MCF 10A (cell line): ENCODE measurements at regions of chr5 and their contacts with region 1.

Region 1: DNA sequence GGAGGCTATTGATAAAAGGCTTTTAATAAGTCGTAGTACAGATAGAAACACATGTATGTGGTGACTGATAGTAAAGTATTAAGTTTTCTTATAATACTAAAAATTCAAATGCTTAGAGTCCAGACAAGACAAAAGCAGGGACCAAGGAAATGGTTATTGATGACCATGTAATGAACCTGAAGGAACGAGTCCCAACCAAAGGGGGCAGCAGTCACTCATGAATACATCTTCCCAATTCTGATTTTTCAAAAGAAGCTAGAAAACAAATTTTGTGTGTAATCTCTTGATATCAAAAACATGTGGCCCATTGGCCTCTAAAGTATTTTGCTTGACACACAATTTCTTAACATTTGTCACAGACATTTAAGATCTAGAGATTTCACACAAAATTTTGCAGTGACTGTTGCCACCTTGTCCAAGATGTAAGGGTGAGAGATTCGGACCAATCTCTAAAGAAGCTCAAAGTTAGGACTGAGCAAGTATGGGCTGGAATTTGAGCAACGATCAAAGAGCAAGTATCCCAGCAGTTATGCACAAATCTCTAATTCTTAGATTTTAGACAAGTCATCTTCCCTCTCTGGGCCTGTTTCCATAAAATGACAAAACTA is 66.8 kb downstream of the ARL15 start:
- DNase-seq: peak; percentile 57
- H3K4me3 Mint-ChIP-seq: no peak overlapping the region
- H3K27ac Mint-ChIP-seq: no peak overlapping the region
- H3K4me1 Mint-ChIP-seq: no peaks in the 10 kb centered on the region
- H3K27me3 Mint-ChIP-seq: no peaks in the 10 kb centered on the region
- CTCF ChIP-seq: peak; percentile 86

Region 2: DNA sequence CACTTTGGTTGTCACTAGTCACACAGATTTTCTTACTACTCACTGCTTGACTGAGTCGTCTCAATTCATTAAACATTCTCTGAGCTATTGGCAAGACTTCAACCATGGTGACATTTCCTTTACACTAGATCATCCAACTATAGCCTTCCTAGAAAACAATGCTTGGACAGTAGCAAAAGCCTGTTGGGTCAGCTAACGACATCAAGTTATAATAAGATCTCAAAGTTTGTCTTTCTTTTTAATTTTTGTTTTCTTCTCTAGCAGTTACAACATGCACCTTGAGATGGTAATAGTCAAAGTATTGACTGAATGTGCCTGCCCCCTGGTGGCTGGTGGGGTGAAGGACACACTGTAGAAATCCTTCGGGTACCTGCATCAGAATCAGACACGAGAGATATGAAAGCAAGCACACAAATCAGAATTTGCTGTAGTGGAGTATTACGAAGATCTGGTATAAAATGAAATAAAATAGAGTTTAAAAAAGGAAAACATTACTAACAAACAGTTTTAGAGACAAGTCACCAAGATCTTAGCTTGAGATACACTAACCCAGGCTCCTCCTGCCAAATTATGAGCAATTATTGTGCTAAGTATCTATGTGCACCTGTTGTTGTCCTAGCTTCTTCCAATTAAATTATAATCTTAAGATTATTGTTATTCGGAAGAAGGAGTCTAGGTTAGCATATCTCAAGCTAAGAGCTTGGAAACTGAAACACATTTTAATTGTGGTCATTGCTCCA is 14.4 kb before region 1 on chr5:
- CTCF ChIA-PET with region 1: interaction called, 18 read pairs
- POLR2A ChIA-PET with region 1: interaction called, 3 read pairs
- intact Hi-C with region 1: no loop called
- DNase-seq: peak; percentile 67
- H3K4me3 Mint-ChIP-seq: no peak overlapping the region
- H3K27ac Mint-ChIP-seq: no peak overlapping the region
- H3K4me1 Mint-ChIP-seq: peaks cover 6% of the 10 kb centered on the region
- H3K27me3 Mint-ChIP-seq: no peaks in the 10 kb centered on the region
- CTCF ChIP-seq: peak; percentile 74

Region 3: GRCh38 chr5:54310433-54311175 is 67.0 kb after region 1 on chr5 and contains the start of gene ARL15:
- CTCF ChIA-PET with region 1: interaction called, 4 read pairs
- POLR2A ChIA-PET with region 1: interaction called, 8 read pairs
- intact Hi-C with region 1: loop called (anchors 2 kb)
- DNase-seq: peak; percentile 98
- H3K4me3 Mint-ChIP-seq: peak within 1 kb of the TSS; percentile 88
- H3K27ac Mint-ChIP-seq: peak within 1 kb of the TSS; percentile 86
- H3K4me1 Mint-ChIP-seq: peaks cover 17% of the 10 kb centered on the region
- H3K27me3 Mint-ChIP-seq: no peaks in the 10 kb centered on the region
- CTCF ChIP-seq: no peak
- total RNA-seq, gene ARL15: 10.1 and 11.3 TPM in 2 replicates

Region 4: DNA sequence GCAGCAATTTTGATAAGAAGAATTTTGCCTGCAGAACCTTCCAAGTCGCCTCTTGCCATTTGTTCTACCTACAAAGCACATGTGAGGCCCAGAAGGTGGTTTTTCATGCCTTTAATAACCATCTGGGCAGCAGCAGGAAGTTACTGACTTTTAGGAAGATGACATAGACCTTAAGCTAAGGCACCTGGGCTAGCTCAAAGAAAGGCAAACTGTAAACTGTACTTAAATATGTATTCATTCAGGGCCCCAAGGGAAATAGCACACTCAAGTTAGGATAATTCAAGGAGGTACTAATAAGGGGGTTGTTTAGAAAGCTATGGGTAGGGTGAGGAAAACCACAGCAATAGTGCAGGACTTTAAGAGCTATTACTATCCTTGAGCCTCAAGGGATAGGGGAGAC is 154.6 kb after region 1 on chr5:
- CTCF ChIA-PET with region 1: no interaction called
- POLR2A ChIA-PET with region 1: no interaction called
- intact Hi-C with region 1: no loop called
- DNase-seq: no peak
- H3K4me3 Mint-ChIP-seq: no peak overlapping the region
- H3K27ac Mint-ChIP-seq: no peak overlapping the region
- H3K4me1 Mint-ChIP-seq: peaks cover 5% of the 10 kb centered on the region
- H3K27me3 Mint-ChIP-seq: no peaks in the 10 kb centered on the region
- CTCF ChIP-seq: no peak

Region 5: DNA sequence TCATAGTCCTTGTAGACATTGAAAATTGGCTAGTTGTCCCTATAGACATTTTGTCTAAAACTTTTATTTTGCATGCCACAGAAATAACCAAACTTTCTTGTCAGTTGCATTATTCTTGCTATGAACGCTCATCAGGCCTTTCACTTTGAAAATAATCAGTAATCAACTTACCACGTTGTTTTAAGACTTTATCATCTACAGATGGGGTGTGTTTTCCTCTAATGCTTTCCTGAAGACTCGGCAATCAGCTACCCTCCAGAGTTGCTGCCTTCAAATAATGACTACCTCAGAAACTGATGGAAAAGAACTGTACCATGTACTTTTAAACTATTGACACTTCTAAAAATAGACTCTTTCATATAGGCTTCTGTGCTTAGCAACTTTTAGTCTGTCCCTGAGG is 178.4 kb after region 1 on chr5:
- CTCF ChIA-PET with region 1: interaction called, 19 read pairs
- POLR2A ChIA-PET with region 1: no interaction called
- intact Hi-C with region 1: loop called (anchors 1 kb)
- DNase-seq: no peak
- H3K4me3 Mint-ChIP-seq: no peak overlapping the region
- H3K27ac Mint-ChIP-seq: no peak overlapping the region
- H3K4me1 Mint-ChIP-seq: peaks cover 14% of the 10 kb centered on the region
- H3K27me3 Mint-ChIP-seq: no peaks in the 10 kb centered on the region
- CTCF ChIP-seq: no peak

Region 6: DNA sequence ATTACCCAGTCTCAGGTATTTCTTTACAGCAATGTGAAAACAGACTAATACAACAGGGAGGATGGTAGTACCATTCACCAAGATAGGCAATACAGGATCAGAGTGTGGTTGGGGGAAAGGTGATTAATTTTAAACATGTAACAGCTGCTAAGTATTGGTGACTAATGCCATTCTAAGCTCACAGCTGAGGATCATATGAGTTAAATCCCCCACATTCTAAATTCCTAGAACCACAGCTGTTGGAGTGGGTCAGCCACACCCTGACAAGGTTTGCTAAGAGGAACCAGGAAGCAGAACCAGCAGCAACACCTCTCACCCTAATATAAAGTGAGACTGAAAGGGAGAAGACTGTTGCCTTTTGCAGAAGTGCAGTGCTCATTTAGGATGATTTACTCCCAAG is 236.7 kb after region 1 on chr5:
- CTCF ChIA-PET with region 1: interaction called, 10 read pairs
- POLR2A ChIA-PET with region 1: no interaction called
- intact Hi-C with region 1: no loop called
- DNase-seq: no peak
- H3K4me3 Mint-ChIP-seq: no peak overlapping the region
- H3K27ac Mint-ChIP-seq: no peak overlapping the region
- H3K4me1 Mint-ChIP-seq: no peaks in the 10 kb centered on the region
- H3K27me3 Mint-ChIP-seq: no peaks in the 10 kb centered on the region
- CTCF ChIP-seq: no peak